ENCODE measurements at regions of chr22 and their contacts with region 1.

Region 1: DNA sequence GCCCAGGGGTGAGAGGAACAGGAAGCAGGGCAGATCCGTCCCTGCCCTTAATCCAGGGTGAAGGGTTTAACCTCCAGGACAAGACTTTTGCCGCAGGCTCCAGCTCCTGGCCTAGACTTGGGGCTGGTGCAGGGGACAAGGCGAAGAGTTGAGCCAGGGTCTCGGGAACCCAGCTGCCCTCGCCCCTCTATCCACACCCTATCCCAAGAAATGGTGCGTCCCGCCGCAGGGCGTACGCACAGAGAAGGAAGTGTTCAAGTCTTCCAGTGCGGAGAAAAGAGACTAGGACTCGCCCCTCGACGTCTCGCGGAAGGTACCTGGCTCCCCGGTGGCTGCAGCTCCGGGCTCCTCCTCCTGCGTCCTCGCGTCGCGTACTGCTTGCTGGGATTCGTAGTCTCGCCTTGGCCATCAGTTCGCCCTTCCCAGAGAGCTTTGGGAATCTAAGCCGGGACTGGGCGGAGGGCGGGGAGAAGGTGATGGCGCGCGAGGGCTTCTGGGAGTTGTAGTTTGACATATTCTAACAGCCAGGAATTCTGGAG is at the start of gene ZMAT5:
- DNase-seq: peak; percentile 94 to 97 (median 96)
- ATAC-seq: peak; percentile 97 to 99 (median 98)
- H3K4me3 ChIP-seq: peak within 1 kb of the TSS; percentile 70 to 98 (median 80)
- H3K27ac ChIP-seq: peak within 1 kb of the TSS; percentile 87 to 96 (median 91)
- H3K4me1 ChIP-seq: peaks cover 6 to 42% (median 29%) of the 10 kb centered on the region in 12 donors
- H3K27me3 ChIP-seq: no peaks in the 10 kb centered on the region
- CTCF ChIP-seq: no peak
- POLR2A ChIP-seq: peak in 1 of 2 donors; percentile 55
- total RNA-seq, gene ZMAT5: 19.4 to 28.9 (median 20.9) TPM

Region 2: DNA sequence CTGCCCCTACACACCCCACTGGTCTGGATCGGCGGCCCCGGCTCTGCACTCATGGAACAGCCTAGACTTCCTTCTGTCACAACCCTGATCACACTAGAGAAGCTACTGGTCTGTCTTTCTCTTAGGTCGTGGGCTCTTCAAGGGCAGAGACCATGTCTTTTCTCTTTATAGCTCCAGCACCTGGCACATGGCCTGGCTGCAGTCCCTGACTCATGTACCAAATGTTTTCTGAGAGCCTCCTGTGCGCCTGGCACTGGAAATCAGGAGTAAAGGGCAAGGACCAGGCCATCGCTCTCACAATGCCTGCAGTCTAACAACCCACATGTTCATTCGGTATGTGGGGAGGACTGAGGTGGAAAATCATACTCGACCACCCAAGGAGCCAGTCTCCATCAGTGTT is 63.9 kb after region 1 on chr22:
- intact Hi-C with region 1: loop called in 4 of 10 experiments (anchors 5 to 10 kb)
- DNase-seq: peak; percentile 64 to 88 (median 70)
- ATAC-seq: peak; percentile 84 to 88 (median 86)
- H3K4me3 ChIP-seq: no peak overlapping the region
- H3K27ac ChIP-seq: peak overlapping the region; percentile 16 to 88 (median 74)
- H3K4me1 ChIP-seq: peaks cover 0 to 56% (median 25%) of the 10 kb centered on the region in 12 donors
- H3K27me3 ChIP-seq: no peaks in the 10 kb centered on the region
- CTCF ChIP-seq: no peak
- POLR2A ChIP-seq: no peak

Region 3: DNA sequence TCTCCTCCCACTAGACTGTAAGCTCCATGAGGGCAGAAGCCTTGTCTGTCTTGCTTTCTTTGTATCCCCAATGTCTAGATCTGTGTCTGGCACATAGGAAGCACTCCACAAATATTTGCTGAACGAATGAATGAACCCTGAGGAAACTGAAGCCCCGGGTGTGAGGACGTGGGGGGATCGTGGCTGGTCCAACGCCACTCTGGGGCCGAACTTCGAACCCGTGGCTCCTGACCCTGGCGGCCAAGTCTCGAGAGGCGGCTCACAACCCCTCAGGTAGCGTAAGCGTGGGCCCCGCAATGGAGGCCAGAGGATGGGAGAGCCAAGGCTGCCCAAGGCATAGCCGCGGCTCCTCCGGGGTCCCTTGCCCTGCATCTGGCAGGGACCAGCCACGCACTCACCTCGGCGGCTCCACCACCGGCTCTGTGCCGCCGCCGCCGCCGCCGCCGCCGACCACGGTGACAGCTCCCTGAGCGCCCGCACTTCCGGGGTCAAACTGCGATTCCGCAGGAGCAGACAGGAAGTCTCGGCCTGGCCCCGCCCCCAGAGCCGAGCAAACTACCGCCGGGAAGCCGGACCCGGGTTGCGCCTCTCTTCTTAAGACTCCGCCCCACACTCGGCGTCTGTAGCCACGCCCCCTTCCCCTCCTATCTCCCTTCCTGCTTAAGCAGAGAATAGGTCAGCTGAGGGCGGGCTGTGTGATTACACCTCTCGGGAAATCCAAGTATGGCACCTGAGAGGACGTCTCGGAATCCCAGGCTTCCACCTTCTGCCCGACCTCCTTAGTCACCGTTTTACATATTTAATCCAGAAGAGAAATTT is 71.3 kb after region 1 on chr22 and contains the start of gene ASCC2:
- intact Hi-C with region 1: loop called in 4 of 10 experiments (anchors 5 to 10 kb)
- DNase-seq: peak; percentile 99 to 100 (median 99)
- ATAC-seq: peak; percentile 98 to 100 (median 99)
- H3K4me3 ChIP-seq: peak within 1 kb of the TSS; percentile 70 to 98 (median 88)
- H3K27ac ChIP-seq: peak within 1 kb of the TSS; percentile 56 to 94 (median 80)
- H3K4me1 ChIP-seq: peaks cover 3 to 47% (median 23%) of the 10 kb centered on the region in 12 donors
- H3K27me3 ChIP-seq: no peaks in the 10 kb centered on the region
- CTCF ChIP-seq: peak in 2 of 12 donors; percentile 9 to 13
- POLR2A ChIP-seq: peak; percentile 16 to 89
- total RNA-seq, gene ASCC2: 23.6 to 53.2 (median 30.4) TPM

Region 4: GRCh38 chr22:30140414-30140813 is 373.7 kb after region 1 on chr22:
- intact Hi-C with region 1: no loop called
- DNase-seq: no peak
- ATAC-seq: no peak
- H3K4me3 ChIP-seq: no peak overlapping the region
- H3K27ac ChIP-seq: no peak overlapping the region
- H3K4me1 ChIP-seq: no peaks in the 10 kb centered on the region
- H3K27me3 ChIP-seq: peaks cover 0 to 34% (median 7%) of the 10 kb centered on the region in 9 donors
- CTCF ChIP-seq: no peak
- POLR2A ChIP-seq: no peak